ENCODE measurements at regions of chr12 and their contacts with region 1.

Region 1: DNA sequence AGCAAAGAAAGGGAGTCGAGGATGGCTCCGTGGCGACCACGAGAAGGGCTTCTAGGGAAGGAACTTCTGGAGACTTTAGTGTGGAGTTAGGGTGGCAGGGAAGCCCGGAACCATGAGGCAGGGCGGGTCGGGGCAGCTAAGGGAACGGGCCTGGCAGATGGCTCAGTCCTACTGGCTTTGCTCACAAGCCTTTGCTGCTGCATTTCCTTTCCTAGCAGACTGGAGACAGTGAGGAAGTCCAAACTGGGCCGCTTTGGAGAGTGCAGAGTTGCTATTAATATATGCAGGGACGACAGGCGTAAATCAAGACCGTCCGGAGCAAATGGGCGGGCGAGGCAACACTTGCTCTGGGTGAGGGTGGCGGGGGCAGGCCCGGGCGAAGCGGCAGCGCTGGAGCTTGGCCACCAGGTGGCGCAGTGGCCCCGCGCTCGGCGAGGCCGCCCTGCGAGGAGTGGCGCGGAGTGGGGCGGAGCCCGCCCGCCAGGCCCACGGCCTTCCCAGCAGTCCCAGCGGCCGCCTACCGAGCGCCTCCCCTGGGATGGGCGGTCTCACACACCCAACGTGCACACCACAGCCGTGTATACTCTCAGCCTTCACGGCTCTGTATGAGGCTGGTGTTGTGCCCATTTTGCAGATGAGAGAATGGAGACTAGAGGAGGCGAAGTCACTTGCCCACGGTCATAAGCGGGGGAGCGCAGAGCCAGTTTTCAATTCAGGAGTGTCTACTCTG is 24.4 kb upstream of the LRTM2 start:
- DNase-seq: peak; percentile 41
- ATAC-seq: peak; percentile 95
- H3K4me3 ChIP-seq: peak overlapping the region; percentile 48 to 73
- H3K27ac ChIP-seq: peak overlapping the region; percentile 71
- H3K4me1 ChIP-seq: no peaks in the 10 kb centered on the region
- H3K27me3 ChIP-seq: no peaks in the 10 kb centered on the region
- CTCF ChIP-seq: peak; percentile 93

Region 2: GRCh38 chr12:1650260-1650977 is 145.5 kb before region 1 on chr12:
- CTCF ChIA-PET with region 1: interaction called, 30 read pairs
- POLR2A ChIA-PET with region 1: no interaction called
- in situ Hi-C with region 1: no loop called
- intact Hi-C with region 1: loop called (anchors 1 kb)
- DNase-seq: no peak
- ATAC-seq: no peak
- H3K4me3 ChIP-seq: no peak overlapping the region
- H3K27ac ChIP-seq: no peak overlapping the region
- H3K4me1 ChIP-seq: no peaks in the 10 kb centered on the region
- H3K27me3 ChIP-seq: no peaks in the 10 kb centered on the region
- CTCF ChIP-seq: no peak

Region 3: DNA sequence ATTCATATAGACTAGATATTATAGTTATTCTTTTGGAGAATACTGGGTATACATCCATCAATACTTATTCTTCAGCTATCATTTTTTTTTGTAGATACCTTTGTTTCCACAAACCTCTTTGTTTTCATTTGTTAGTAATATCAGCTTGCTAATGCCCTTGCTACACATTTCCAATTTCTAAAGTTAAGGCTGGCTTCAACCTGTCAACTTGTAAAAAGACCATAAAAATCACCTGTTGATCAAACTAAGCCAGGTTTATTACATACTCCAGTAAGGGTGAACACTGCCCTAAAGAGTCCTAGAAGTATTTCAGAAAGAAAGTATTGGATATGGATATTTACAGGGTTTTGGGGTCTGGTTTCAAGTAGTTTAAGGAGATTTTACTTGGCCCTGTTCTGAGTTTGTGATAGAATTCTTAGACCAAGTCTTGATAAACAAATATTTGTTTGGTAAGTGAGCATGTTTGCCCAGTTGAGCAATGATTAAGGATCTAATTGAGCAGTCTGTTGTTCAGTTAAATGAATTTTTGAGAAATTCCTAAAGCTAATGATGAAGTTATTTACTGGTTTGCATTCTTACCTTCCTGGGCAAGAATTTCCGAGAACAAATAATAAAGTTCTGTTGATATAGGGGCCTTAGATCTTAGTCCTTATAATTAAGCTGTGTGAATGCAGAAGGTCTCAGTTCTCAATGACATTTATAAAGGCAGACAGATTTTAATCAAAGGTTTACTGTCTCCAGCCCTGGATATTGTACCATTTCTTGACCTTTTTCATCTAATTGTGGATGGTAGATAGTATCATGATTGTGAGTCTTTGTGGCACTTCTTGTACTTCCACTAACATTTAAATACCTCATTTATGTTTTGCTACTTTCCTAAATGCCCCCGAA is 28.3 kb before region 1 on chr12:
- CTCF ChIA-PET with region 1: interaction called, 13 read pairs
- POLR2A ChIA-PET with region 1: interaction called, 3 read pairs
- in situ Hi-C with region 1: no loop called
- intact Hi-C with region 1: no loop called
- DNase-seq: no peak
- ATAC-seq: no peak; the same call in 1 of the 2 replicates
- H3K4me3 ChIP-seq: no peak overlapping the region
- H3K27ac ChIP-seq: no peak overlapping the region
- H3K4me1 ChIP-seq: peaks cover 17% of the 10 kb centered on the region
- H3K27me3 ChIP-seq: no peaks in the 10 kb centered on the region
- CTCF ChIP-seq: no peak

Region 4: GRCh38 chr12:1859643-1860042 is 63.7 kb after region 1 on chr12:
- CTCF ChIA-PET with region 1: no interaction called
- POLR2A ChIA-PET with region 1: no interaction called
- in situ Hi-C with region 1: no loop called
- intact Hi-C with region 1: no loop called
- DNase-seq: no peak
- ATAC-seq: no peak
- H3K4me3 ChIP-seq: no peak overlapping the region
- H3K27ac ChIP-seq: no peak overlapping the region
- H3K4me1 ChIP-seq: no peaks in the 10 kb centered on the region
- H3K27me3 ChIP-seq: no peaks in the 10 kb centered on the region
- CTCF ChIP-seq: no peak

Region 5: GRCh38 chr12:1939801-1940607 is 144.1 kb after region 1 on chr12:
- CTCF ChIA-PET with region 1: interaction called, 10 read pairs
- POLR2A ChIA-PET with region 1: no interaction called
- in situ Hi-C with region 1: no loop called
- intact Hi-C with region 1: loop called (anchors 1 kb)
- DNase-seq: peak; percentile 67
- ATAC-seq: peak; percentile 95
- H3K4me3 ChIP-seq: no peak overlapping the region
- H3K27ac ChIP-seq: peak overlapping the region; percentile 63
- H3K4me1 ChIP-seq: peaks cover 3% of the 10 kb centered on the region; the same call in 1 of the 2 replicates
- H3K27me3 ChIP-seq: no peaks in the 10 kb centered on the region
- CTCF ChIP-seq: peak; percentile 87